ENCODE measurements at regions of chr10 and their contacts with region 1.

Region 1: GRCh38 chr10:23525406-23525805 is 86.5 kb downstream of the OTUD1 start:
- DNase-seq: no peak
- ATAC-seq: peak; percentile 51
- H3K4me3 Mint-ChIP-seq: no peak overlapping the region
- H3K27ac Mint-ChIP-seq: no peak overlapping the region
- H3K4me1 Mint-ChIP-seq: peaks cover 5% of the 10 kb centered on the region
- H3K27me3 Mint-ChIP-seq: peaks cover 3% of the 10 kb centered on the region
- CTCF ChIP-seq: peak; percentile 32

Region 2: DNA sequence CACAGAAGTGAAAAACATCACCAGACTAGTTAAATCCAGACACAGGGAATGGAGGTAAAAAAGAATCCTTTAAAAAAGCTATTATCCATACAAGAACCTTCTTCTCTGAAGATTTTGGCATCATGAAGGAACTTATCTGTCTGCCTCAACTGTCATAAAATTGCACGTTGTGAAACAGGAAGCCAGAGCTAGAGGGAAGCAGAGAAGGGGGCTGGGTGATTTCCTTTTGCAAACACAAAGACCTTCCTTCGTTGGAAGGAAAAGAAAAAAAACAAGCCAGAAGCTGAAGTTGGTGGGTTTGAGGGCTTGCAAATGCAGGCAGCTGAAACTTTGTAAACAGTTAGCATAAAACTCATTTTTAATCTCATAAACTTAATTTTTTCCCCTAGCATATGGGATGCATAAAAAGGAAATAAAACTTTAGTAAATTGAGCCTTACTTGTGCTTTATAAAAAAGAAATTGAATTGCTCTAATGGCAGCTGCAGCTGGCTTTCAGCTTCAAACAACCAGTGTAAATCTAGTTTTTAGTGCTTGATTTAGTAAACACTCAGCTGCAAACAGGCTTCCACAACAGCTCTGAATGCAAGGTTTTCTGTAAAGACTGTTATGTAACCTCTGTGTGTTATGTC is 15.1 kb after region 1 on chr10:
- CTCF ChIA-PET with region 1: interaction called, 20 read pairs
- POLR2A ChIA-PET with region 1: no interaction called
- intact Hi-C with region 1: no loop called
- DNase-seq: no peak
- ATAC-seq: no peak
- H3K4me3 Mint-ChIP-seq: no peak overlapping the region
- H3K27ac Mint-ChIP-seq: peak overlapping the region; percentile 71
- H3K4me1 Mint-ChIP-seq: peaks cover 69% of the 10 kb centered on the region
- H3K27me3 Mint-ChIP-seq: no peaks in the 10 kb centered on the region
- CTCF ChIP-seq: no peak